CD4-positive, alpha-beta memory T cell (primary cell): ENCODE measurements at regions of chr10 and their contacts with region 1.

Region 1: GRCh38 chr10:22615819-22616499 is 98.4 kb downstream of the PIP4K2A start:
- DNase-seq: peak in 4 of 5 donors; percentile 32 to 81 (median 44)
- H3K4me3 ChIP-seq: peak overlapping the region; percentile 2 to 6
- H3K4me3 Mint-ChIP-seq: peak overlapping the region; percentile 53 to 85 (median 75)
- H3K27ac ChIP-seq: peak overlapping the region; percentile 53
- H3K27ac Mint-ChIP-seq: peak overlapping the region; percentile 87 to 98 (median 95)
- H3K4me1 ChIP-seq: peaks cover 97% of the 10 kb centered on the region
- H3K4me1 Mint-ChIP-seq: peaks cover 78 to 100% (median 91%) of the 10 kb centered on the region in 4 donors
- H3K27me3 ChIP-seq: no peaks in the 10 kb centered on the region
- H3K27me3 Mint-ChIP-seq: no peaks in the 10 kb centered on the region

Region 2: GRCh38 chr10:22464966-22465629 is 150.9 kb before region 1 on chr10:
- CTCF ChIA-PET with region 1: no interaction called
- POLR2A ChIA-PET with region 1: no interaction called
- intact Hi-C with region 1: no loop called
- DNase-seq: no peak
- H3K4me3 ChIP-seq: no peak overlapping the region
- H3K4me3 Mint-ChIP-seq: no peak overlapping the region
- H3K27ac ChIP-seq: no peak overlapping the region
- H3K27ac Mint-ChIP-seq: no peak overlapping the region
- H3K4me1 ChIP-seq: no peaks in the 10 kb centered on the region
- H3K4me1 Mint-ChIP-seq: no peaks in the 10 kb centered on the region
- H3K27me3 ChIP-seq: no peaks in the 10 kb centered on the region
- H3K27me3 Mint-ChIP-seq: peaks cover 3 to 4% of the 10 kb centered on the region in 2 donors

Region 3: DNA sequence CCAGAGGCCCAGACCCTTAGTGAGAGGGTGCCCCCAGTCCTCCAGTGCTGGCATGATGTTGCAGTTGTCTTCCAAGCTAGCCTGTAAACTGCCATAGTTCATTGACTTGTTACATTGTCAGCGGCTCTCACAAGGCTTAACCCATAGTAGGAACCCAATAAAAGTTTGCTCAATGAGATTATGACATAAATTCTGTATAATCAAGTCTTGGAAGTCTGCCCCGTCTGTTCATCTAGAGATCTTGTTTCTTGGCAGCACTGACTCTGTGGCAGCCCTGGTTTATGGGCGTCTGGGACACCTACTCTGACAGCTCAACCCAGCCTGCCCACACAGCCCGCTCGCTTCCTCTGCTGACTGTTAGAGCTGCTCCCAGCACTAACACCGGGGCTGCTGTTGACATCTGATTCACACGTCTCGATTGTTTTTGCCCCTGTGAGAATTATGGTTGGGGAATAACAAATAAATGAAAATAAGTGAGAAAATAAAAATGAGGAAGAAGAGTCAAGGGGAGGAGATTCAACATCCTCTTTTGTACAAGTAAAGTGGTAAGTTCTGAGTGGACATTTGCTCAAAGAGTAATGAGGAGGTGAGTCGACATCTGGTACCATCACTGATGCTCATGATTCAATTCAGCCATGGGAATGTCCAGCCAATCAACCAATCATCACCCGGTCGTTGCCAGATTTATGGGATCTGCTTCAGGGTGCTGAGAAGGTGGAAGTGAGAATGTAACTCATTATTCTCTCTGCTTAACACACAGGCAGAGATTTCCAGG is 109.9 kb before region 1 on chr10:
- CTCF ChIA-PET with region 1: no interaction called
- POLR2A ChIA-PET with region 1: no interaction called
- intact Hi-C with region 1: no loop called
- DNase-seq: peak in 4 of 5 donors; percentile 14 to 18 (median 16)
- H3K4me3 ChIP-seq: no peak overlapping the region
- H3K4me3 Mint-ChIP-seq: peak overlapping the region in 4 of 8 donors; percentile 23 to 49 (median 30)
- H3K27ac ChIP-seq: no peak overlapping the region
- H3K27ac Mint-ChIP-seq: peak overlapping the region in 3 of 7 donors; percentile 0 to 34 (median 13)
- H3K4me1 ChIP-seq: peaks cover 7% of the 10 kb centered on the region
- H3K4me1 Mint-ChIP-seq: peaks cover 8 to 18% (median 13%) of the 10 kb centered on the region in 4 donors
- H3K27me3 ChIP-seq: no peaks in the 10 kb centered on the region
- H3K27me3 Mint-ChIP-seq: peaks cover 6 to 17% of the 10 kb centered on the region in 2 donors

Region 4: GRCh38 chr10:22573820-22574569 is 42.0 kb before region 1 on chr10:
- CTCF ChIA-PET with region 1: interaction called, 10 read pairs
- POLR2A ChIA-PET with region 1: interaction called, 5 read pairs
- intact Hi-C with region 1: no loop called
- DNase-seq: peak; percentile 17 to 40 (median 21)
- H3K4me3 ChIP-seq: no peak overlapping the region
- H3K4me3 Mint-ChIP-seq: peak overlapping the region in 3 of 8 donors; percentile 9 to 77 (median 31)
- H3K27ac ChIP-seq: no peak overlapping the region
- H3K27ac Mint-ChIP-seq: peak overlapping the region; percentile 27 to 78 (median 72)
- H3K4me1 ChIP-seq: peaks cover 37% of the 10 kb centered on the region
- H3K4me1 Mint-ChIP-seq: peaks cover 39 to 77% (median 58%) of the 10 kb centered on the region in 4 donors
- H3K27me3 ChIP-seq: no peaks in the 10 kb centered on the region
- H3K27me3 Mint-ChIP-seq: no peaks in the 10 kb centered on the region

Region 5: DNA sequence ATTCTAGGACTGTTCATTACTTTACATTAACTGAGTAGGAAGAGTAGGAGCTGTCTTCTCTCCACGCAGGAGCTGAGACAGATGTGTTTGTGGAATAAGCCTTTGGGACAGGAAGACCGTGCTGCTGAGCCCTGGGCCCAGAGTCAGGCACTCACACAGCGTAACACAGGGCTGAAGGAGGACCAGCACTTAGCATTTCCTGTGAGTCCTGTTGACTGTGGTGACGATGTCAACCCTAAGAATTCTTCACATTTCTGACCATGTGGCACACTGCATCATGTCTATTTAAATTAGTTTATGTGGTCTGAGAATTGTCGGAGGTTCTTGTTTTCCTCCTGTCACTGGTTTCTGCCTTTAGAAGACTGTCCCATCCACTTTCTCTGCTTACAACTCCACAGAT is 18.8 kb before region 1 on chr10:
- CTCF ChIA-PET with region 1: interaction called, 6 read pairs
- POLR2A ChIA-PET with region 1: interaction called, 53 read pairs
- intact Hi-C with region 1: loop called (anchors 1 kb)
- DNase-seq: peak in 4 of 5 donors; percentile 28 to 46 (median 36)
- H3K4me3 ChIP-seq: no peak overlapping the region
- H3K4me3 Mint-ChIP-seq: peak overlapping the region in 7 of 8 donors; percentile 45 to 85 (median 55)
- H3K27ac ChIP-seq: no peak overlapping the region
- H3K27ac Mint-ChIP-seq: peak overlapping the region; percentile 65 to 93 (median 87)
- H3K4me1 ChIP-seq: peaks cover 81% of the 10 kb centered on the region
- H3K4me1 Mint-ChIP-seq: peaks cover 66 to 95% (median 80%) of the 10 kb centered on the region in 4 donors
- H3K27me3 ChIP-seq: no peaks in the 10 kb centered on the region
- H3K27me3 Mint-ChIP-seq: no peaks in the 10 kb centered on the region

Region 6: GRCh38 chr10:22630234-22631174 is 14.5 kb after region 1 on chr10:
- CTCF ChIA-PET with region 1: interaction called, 12 read pairs
- POLR2A ChIA-PET with region 1: interaction called, 329 read pairs
- intact Hi-C with region 1: loop called (anchors 1 kb)
- DNase-seq: peak; percentile 66 to 86 (median 68)
- H3K4me3 ChIP-seq: peak overlapping the region; percentile 8 to 38
- H3K4me3 Mint-ChIP-seq: peak overlapping the region; percentile 78 to 86 (median 80)
- H3K27ac ChIP-seq: peak overlapping the region; percentile 64
- H3K27ac Mint-ChIP-seq: peak overlapping the region; percentile 87 to 99 (median 96)
- H3K4me1 ChIP-seq: peaks cover 99% of the 10 kb centered on the region
- H3K4me1 Mint-ChIP-seq: peaks cover 82 to 98% (median 94%) of the 10 kb centered on the region in 4 donors
- H3K27me3 ChIP-seq: no peaks in the 10 kb centered on the region
- H3K27me3 Mint-ChIP-seq: no peaks in the 10 kb centered on the region

Region 7: DNA sequence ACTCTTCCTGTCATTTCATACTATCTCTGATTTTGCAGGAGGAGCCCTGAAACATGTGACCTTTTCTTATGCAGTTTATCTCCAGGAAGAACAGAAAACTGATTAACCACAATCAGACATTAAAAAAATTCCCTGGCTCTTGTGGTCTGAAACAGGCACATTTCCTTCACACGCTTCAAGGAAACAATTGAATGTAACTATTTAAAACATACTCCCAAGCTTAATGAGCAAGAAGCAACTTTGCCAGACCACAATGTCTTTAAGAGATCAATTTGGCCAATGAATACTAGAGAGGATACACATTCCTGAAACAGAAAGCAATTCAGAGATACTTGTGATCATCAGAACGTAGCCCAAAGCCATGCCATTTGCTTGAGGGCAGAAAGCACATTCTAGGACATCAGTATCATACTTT is 32.6 kb after region 1 on chr10:
- CTCF ChIA-PET with region 1: interaction called, 39 read pairs
- POLR2A ChIA-PET with region 1: interaction called, 895 read pairs
- intact Hi-C with region 1: loop called (anchors 1 kb)
- DNase-seq: peak in 1 of 5 donors; percentile 27
- H3K4me3 ChIP-seq: peak overlapping the region in 1 of 2 donors; percentile 44
- H3K4me3 Mint-ChIP-seq: peak overlapping the region; percentile 67 to 91 (median 78)
- H3K27ac ChIP-seq: peak overlapping the region; percentile 61
- H3K27ac Mint-ChIP-seq: peak overlapping the region; percentile 85 to 96 (median 95)
- H3K4me1 ChIP-seq: peaks cover 100% of the 10 kb centered on the region
- H3K4me1 Mint-ChIP-seq: peaks cover 82 to 96% (median 90%) of the 10 kb centered on the region in 4 donors
- H3K27me3 ChIP-seq: no peaks in the 10 kb centered on the region
- H3K27me3 Mint-ChIP-seq: no peaks in the 10 kb centered on the region

Region 8: GRCh38 chr10:22714479-22715289 is 98.7 kb after region 1 on chr10 and contains the start of gene PIP4K2A:
- CTCF ChIA-PET with region 1: interaction called, 5 read pairs
- POLR2A ChIA-PET with region 1: interaction called, 51 read pairs
- intact Hi-C with region 1: loop called (anchors 1 kb)
- DNase-seq: peak; percentile 71 to 84 (median 81)
- H3K4me3 ChIP-seq: peak within 1 kb of the TSS; percentile 77 to 79
- H3K4me3 Mint-ChIP-seq: peak within 1 kb of the TSS; percentile 87 to 98 (median 96)
- H3K27ac ChIP-seq: peak within 1 kb of the TSS; percentile 88
- H3K27ac Mint-ChIP-seq: peak within 1 kb of the TSS; percentile 88 to 96 (median 92)
- H3K4me1 ChIP-seq: peaks cover 34% of the 10 kb centered on the region
- H3K4me1 Mint-ChIP-seq: peaks cover 28 to 40% (median 31%) of the 10 kb centered on the region in 4 donors
- H3K27me3 ChIP-seq: no peaks in the 10 kb centered on the region
- H3K27me3 Mint-ChIP-seq: no peaks in the 10 kb centered on the region
- total RNA-seq, gene PIP4K2A: 171 to 179 TPM

Region 9: DNA sequence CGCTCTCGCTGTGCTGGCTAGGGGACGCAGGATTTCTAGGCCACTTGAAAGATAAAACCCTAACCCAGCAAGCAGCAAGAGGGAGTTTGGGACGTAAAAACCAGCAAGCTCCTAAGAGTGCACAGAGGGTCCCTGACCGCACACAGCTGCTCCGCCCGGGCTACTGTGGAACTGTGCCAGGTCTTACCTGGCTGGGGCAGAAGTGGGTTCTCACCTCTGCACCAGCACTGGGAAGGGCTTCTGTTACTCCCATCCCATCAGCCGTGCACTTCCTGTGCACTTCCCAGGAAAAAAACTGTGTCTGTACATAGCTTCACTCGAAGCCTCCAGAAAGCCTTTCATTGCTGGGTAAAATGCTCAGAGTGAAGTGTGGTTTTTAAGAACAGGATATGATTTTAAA is 530.3 kb after region 1 on chr10:
- CTCF ChIA-PET with region 1: no interaction called
- POLR2A ChIA-PET with region 1: no interaction called
- intact Hi-C with region 1: no loop called
- DNase-seq: no peak
- H3K4me3 ChIP-seq: no peak overlapping the region
- H3K4me3 Mint-ChIP-seq: no peak overlapping the region
- H3K27ac ChIP-seq: no peak overlapping the region
- H3K27ac Mint-ChIP-seq: no peak overlapping the region
- H3K4me1 ChIP-seq: no peaks in the 10 kb centered on the region
- H3K4me1 Mint-ChIP-seq: no peaks in the 10 kb centered on the region
- H3K27me3 ChIP-seq: peaks cover 4% of the 10 kb centered on the region
- H3K27me3 Mint-ChIP-seq: peaks cover 6 to 20% of the 10 kb centered on the region in 2 donors